ENCODE measurements at regions of chr10 and their contacts with region 1.

Region 1: GRCh38 chr10:80699602-80700039 is 161.9 kb downstream of the SH2D4B start:
- DNase-seq: peak; percentile 51
- ATAC-seq: peak; percentile 98
- H3K4me3 ChIP-seq: no peak overlapping the region
- H3K27ac ChIP-seq: no peak overlapping the region
- H3K4me1 ChIP-seq: no peaks in the 10 kb centered on the region
- H3K27me3 ChIP-seq: peaks cover 3% of the 10 kb centered on the region; the same call in 1 of the 2 replicates
- CTCF ChIP-seq: peak; percentile 83 to 91 (median 89)
- POLR2A ChIP-seq: no peak
- RAD21 ChIP-seq: peak; percentile 82

Region 2: GRCh38 chr10:80924063-80924952 is 224.7 kb after region 1 on chr10:
- CTCF ChIA-PET with region 1: interaction called, 13 read pairs
- POLR2A ChIA-PET with region 1: no interaction called
- RAD21 ChIA-PET with region 1: no interaction called
- intact Hi-C with region 1: loop called (anchors 1 kb)
- DNase-seq: peak; percentile 21
- ATAC-seq: peak; percentile 78
- H3K4me3 ChIP-seq: no peak overlapping the region
- H3K27ac ChIP-seq: no peak overlapping the region
- H3K4me1 ChIP-seq: no peaks in the 10 kb centered on the region
- H3K27me3 ChIP-seq: no peaks in the 10 kb centered on the region
- CTCF ChIP-seq: peak; percentile 49 to 78 (median 60); a peak in 5 of 6 replicates
- POLR2A ChIP-seq: no peak
- RAD21 ChIP-seq: peak; percentile 49

Region 3: GRCh38 chr10:81018708-81019365 is 319.2 kb after region 1 on chr10:
- CTCF ChIA-PET with region 1: no interaction called
- POLR2A ChIA-PET with region 1: no interaction called
- RAD21 ChIA-PET with region 1: no interaction called
- intact Hi-C with region 1: loop called (anchors 10 kb)
- DNase-seq: peak; percentile 31
- ATAC-seq: peak; percentile 82; the same call in 1 of the 2 replicates
- H3K4me3 ChIP-seq: no peak overlapping the region
- H3K27ac ChIP-seq: no peak overlapping the region
- H3K4me1 ChIP-seq: no peaks in the 10 kb centered on the region
- H3K27me3 ChIP-seq: no peaks in the 10 kb centered on the region
- CTCF ChIP-seq: peak; percentile 37 to 71 (median 66); a peak in 4 of 6 replicates
- POLR2A ChIP-seq: no peak
- RAD21 ChIP-seq: peak; percentile 42